ENCODE measurements at regions of chr16 and their contacts with region 1.

Region 1: DNA sequence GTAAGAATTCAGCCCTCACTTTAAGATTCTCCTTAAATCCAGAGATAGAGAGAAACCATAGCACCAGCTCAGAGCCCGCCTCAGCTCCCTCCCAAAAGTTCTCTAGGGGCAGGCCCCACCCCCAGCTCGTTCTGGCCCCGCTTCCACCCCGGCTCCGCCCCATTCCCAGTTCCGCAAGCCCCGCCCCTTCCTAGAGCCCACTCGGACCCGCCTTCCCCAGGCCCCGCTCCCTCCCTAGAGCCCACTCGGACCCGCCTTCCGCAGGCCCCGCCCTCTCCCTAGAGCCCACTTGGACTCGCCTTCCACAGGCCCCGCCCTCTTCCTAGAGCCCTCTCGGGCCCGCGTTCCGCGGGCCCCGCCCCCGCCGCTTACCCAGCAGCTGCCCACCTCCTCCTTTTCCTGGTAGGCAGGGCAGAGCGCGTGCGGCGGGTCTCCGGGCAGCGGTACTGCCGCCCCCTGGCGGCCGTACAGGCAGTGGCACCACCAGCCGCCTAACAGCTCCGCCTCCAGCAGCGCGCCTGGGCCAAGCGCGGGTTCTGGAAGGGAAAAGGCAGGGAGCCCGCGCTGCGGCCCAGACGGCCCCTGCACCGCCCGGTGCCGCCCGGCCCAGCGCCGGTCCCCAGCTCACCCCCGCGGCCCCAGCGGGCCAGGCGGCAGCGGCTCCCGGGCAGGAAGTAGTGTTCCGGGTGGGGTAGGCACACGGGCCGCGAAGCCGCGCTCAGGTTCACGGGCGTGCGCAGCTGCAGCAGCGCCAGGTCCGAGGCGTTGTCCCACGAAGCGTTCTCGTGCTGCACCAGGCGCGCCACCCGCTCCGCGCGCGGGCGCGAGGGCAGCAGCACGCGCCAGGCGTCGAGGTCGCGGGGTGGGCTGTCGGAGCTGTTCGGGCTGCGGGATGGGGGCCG is 6.8 kb upstream of the PRSS8 start:
- DNase-seq: peak; percentile 99
- H3K4me3 ChIP-seq: peak overlapping the region; percentile 45
- H3K27ac ChIP-seq: peak overlapping the region; percentile 75
- H3K4me1 ChIP-seq: peaks cover 11% of the 10 kb centered on the region
- H3K27me3 ChIP-seq: no peaks in the 10 kb centered on the region
- CTCF ChIP-seq: peak; percentile 97

Region 2: GRCh38 chr16:29987371-29988085 is 1154.8 kb before region 1 on chr16:
- CTCF ChIA-PET with region 1: no interaction called
- POLR2A ChIA-PET with region 1: interaction called, 16 read pairs
- intact Hi-C with region 1: no loop called
- DNase-seq: no peak
- H3K4me3 ChIP-seq: no peak overlapping the region
- H3K27ac ChIP-seq: no peak overlapping the region
- H3K4me1 ChIP-seq: no peaks in the 10 kb centered on the region
- H3K27me3 ChIP-seq: no peaks in the 10 kb centered on the region
- CTCF ChIP-seq: no peak

Region 3: DNA sequence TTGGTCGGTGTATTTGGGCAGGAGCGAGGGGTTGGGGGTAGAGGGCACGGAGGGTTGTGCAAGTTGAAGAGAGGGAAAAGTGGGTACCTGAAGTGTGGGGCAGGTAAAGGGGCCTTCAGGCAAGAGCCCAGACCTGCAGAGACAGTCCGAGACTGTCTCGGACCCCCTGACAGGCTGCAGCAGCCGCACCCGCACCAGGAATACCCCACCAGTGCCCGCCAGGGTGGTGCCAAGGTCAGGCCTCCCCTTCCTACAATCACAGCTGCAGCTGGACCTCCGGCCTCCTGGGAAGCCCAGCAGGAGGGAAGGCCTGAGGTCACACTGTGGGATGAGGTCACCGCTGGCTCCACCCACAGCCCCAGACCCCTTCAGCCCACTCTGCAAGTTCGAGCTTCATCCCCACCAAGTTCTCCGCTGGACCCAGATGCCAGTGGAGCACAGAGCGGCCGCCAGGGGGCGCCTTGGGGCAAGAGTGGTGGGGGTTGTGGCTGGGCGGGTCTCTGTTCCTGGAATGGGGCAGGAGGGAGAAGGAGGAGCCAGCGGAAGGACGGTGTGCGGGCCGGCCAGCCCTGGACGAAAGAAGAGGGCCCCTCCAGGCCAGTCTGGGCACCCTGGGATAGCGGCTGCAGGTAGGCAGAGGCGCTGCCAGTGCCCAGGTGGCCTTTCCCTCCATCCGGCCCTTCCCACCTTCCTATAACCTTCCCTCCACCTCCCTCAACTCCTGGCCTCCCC is 157.5 kb before region 1 on chr16 and contains the start of gene HSD3B7:
- CTCF ChIA-PET with region 1: interaction called, 16 read pairs
- POLR2A ChIA-PET with region 1: no interaction called
- intact Hi-C with region 1: no loop called
- DNase-seq: peak; percentile 85
- H3K4me3 ChIP-seq: no peak within 1 kb of the TSS
- H3K27ac ChIP-seq: no peak within 1 kb of the TSS
- H3K4me1 ChIP-seq: no peaks in the 10 kb centered on the region
- H3K27me3 ChIP-seq: no peaks in the 10 kb centered on the region
- CTCF ChIP-seq: peak; percentile 97
- total RNA-seq, gene HSD3B7: 0.85 and 0.95 TPM in 2 replicates

Region 4: GRCh38 chr16:31073968-31074813 is 68.2 kb before region 1 on chr16 and contains the starts of genes ZNF646 and ZNF668:
- CTCF ChIA-PET with region 1: interaction called, 7 read pairs
- POLR2A ChIA-PET with region 1: no interaction called
- intact Hi-C with region 1: loop called (anchors 1 kb)
- DNase-seq: peak; percentile 100
- H3K4me3 ChIP-seq: peak within 1 kb of the TSS; percentile 89
- H3K27ac ChIP-seq: peak within 1 kb of the TSS; percentile 99
- H3K4me1 ChIP-seq: peaks cover 19% of the 10 kb centered on the region
- H3K27me3 ChIP-seq: no peaks in the 10 kb centered on the region
- CTCF ChIP-seq: no peak
- total RNA-seq, gene ZNF646: 26.6 and 27.9 TPM in 2 replicates
- total RNA-seq, gene ZNF668: 16.5 and 19.8 TPM in 2 replicates

Region 5: DNA sequence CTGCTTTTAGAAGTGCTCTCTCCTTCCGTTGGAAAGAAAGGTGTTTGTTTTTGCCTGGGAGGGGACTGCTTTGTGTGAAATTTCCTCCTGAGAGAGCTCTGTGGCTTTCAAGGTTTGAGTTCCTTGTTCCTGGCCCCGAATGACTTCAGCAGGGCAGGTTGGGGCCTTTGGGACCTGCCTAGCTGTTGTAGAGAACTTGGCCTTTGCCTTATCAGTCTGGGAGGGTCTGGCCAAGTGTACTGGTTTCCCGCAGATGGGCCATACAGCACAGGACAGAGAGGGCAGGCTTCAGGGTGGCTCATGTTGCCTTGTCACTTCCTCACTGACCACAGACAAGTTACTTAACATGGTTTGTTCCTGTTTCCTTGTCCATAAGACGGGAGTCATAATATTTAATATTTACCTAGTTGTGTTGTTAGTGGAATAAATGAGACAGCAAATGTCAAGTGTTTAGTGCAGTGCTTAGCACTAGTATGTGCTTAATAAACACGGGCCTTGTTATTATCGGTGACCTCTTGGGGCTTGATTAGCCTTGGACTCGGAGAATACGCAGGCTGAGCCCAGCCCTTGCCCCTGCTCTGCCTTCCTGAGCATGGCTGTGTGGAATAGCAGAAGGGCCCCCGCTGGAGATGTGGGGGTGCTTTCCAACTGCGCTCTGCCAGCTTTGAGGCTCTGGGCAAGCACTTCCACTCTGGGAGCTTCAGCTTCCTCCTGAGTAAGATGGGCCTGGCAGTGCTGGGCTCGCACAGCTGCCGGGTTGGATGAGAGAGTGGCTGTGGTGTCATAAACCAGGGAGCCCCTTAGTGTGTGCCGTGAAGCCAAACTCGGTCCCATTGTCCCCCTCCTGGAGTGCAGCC is 13.4 kb before region 1 on chr16:
- CTCF ChIA-PET with region 1: no interaction called
- POLR2A ChIA-PET with region 1: interaction called, 23 read pairs
- intact Hi-C with region 1: no loop called
- DNase-seq: no peak
- H3K4me3 ChIP-seq: no peak overlapping the region
- H3K27ac ChIP-seq: no peak overlapping the region
- H3K4me1 ChIP-seq: no peaks in the 10 kb centered on the region
- H3K27me3 ChIP-seq: no peaks in the 10 kb centered on the region
- CTCF ChIP-seq: no peak

Region 6: DNA sequence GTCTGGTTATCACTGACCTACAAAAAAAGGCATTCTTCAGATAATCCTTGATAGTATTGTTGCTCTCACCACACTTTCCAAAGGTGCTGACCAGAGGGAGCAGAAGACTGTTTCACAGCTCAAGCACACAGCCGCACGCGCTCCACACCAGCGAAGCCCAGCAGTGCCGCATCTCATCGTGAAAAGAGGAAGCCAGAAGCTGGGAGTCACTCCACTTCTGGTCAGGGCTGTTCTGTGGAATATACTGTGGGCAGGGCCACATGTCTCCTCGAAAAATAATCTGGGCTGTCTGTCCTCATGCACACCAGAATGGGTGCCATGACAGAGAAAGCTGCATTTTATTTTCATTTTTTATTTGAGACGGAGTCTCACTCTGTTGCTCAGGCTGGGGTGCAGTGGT is 14.8 kb after region 1 on chr16:
- CTCF ChIA-PET with region 1: no interaction called
- POLR2A ChIA-PET with region 1: no interaction called
- intact Hi-C with region 1: no loop called
- DNase-seq: no peak
- H3K4me3 ChIP-seq: no peak overlapping the region
- H3K27ac ChIP-seq: no peak overlapping the region
- H3K4me1 ChIP-seq: no peaks in the 10 kb centered on the region
- H3K27me3 ChIP-seq: no peaks in the 10 kb centered on the region
- CTCF ChIP-seq: no peak

Measured in A673 (cell line).